H1 (cell line): ENCODE measurements at regions of chr1 and their contacts with region 1.

Region 1: DNA sequence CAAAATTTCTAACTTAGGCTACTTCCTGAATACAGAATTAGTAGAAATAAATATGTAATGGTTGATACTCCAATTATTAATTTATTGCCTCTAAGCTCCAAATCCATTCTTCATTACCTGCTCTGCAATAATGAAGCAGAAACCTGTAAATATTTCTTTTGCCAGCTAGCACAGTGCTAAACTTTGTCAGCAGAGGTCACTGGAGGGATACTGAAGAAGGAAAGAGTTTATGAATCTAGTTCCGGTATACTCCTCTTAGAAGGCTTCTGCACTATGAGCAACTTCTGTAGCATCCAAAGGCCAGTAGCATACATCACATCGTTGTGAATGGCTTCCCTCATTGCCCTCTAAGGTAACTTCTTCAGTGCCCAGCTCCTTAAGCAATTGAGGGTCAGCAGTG is 81.0 kb upstream of the LHX8 start:
- DNase-seq: no peak
- H3K4me3 ChIP-seq: no peak overlapping the region
- H3K27ac ChIP-seq: no peak overlapping the region
- H3K4me1 ChIP-seq: no peaks in the 10 kb centered on the region
- H3K27me3 ChIP-seq: no peaks in the 10 kb centered on the region
- CTCF ChIP-seq: peak in 2 of 3 experiments; percentile 58 to 64; a peak in 3 of 4 replicates
- EP300 ChIP-seq: no peak
- POLR2A ChIP-seq: no peak
- RAD21 ChIP-seq: peak; percentile 88

Region 2: DNA sequence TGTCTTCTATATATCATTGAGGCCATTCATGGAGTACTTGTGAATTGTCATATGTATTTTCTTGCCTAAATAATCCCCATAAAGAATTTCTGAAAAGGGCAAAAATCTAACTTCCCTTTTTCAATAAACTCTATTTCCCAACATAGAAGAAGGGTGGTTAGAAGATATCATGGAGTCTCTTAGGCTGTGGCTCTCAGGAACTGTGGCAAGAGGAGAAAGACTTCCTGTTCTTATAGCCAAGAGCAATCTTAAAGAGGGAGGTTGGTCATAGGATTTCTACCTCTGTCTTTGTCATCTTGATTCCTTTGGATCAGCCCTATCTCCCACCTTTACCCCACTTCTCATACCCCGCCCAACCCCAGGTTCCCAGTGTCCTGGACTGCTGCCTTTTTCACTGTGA is 144.4 kb before region 1 on chr1:
- CTCF ChIA-PET with region 1: no interaction called
- POLR2A ChIA-PET with region 1: no interaction called
- DNase-seq: no peak
- H3K4me3 ChIP-seq: no peak overlapping the region
- H3K27ac ChIP-seq: no peak overlapping the region
- H3K4me1 ChIP-seq: no peaks in the 10 kb centered on the region
- H3K27me3 ChIP-seq: no peaks in the 10 kb centered on the region
- CTCF ChIP-seq: no peak
- EP300 ChIP-seq: no peak
- POLR2A ChIP-seq: no peak
- RAD21 ChIP-seq: no peak

Region 3: GRCh38 chr1:75074831-75075395 is 21.7 kb after region 1 on chr1:
- CTCF ChIA-PET with region 1: interaction called, 41 read pairs
- POLR2A ChIA-PET with region 1: no interaction called
- DNase-seq: no peak
- H3K4me3 ChIP-seq: peak overlapping the region in 3 of 4 experiments; percentile 2 to 48 (median 10); a peak in 3 of 8 replicates
- H3K27ac ChIP-seq: peak overlapping the region; percentile 82
- H3K4me1 ChIP-seq: peaks cover 4 to 18% (median 5%) of the 10 kb centered on the region in 4 experiments; a peak in 4 of 7 replicates
- H3K27me3 ChIP-seq: no peaks in the 10 kb centered on the region
- CTCF ChIP-seq: no peak
- EP300 ChIP-seq: no peak
- POLR2A ChIP-seq: no peak
- RAD21 ChIP-seq: no peak

Region 4: DNA sequence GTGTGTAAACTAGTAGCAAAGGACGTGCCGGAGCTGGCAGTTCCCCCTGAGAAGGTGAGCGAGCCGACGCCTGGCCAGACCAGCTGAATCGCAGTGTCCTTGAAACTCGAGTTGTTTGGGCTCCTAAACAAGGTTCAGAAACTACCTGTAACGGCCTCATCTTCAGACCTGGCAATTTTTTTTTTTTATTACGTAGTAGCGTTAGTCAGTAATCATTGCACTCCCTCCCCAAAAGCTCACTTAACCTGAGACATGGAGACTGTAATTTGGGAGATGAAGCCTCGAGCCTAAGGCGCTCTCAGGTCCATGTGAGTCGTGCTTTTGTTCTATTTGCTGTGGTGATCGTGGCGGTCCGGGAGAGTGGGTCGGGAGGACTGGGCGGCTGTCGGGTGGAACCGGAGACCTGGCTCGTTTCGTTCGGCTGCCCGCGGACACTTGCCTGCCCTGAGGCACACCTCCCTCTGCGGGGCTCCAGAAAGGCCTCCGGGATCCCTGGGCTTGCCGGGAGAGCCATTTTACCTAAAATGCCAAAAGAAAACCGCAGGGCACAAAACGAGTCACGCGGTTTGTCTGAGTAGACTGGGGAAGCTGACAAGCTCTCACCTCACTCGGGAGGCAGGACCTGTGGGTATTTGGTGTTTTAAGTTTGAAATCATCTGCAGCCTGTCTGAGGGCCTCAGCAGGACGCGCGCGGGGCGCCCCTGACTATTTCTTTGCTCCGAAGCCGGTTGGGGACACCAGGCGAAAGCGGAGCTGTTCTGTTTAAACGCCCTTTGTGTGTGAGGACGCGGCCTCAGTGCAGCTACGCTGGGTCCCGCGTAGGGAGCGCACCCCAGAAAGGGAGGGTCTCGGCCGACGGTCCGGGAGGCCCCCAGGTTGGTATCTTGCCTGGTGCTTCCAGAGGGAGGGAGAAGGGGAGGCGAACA is 81.7 kb after region 1 on chr1:
- CTCF ChIA-PET with region 1: interaction called, 33 read pairs
- POLR2A ChIA-PET with region 1: no interaction called
- DNase-seq: peak in 1 of 2 experiments; percentile 79
- H3K4me3 ChIP-seq: peak overlapping the region; percentile 49 to 70 (median 57)
- H3K27ac ChIP-seq: no peak overlapping the region
- H3K4me1 ChIP-seq: peaks cover 10 to 46% (median 22%) of the 10 kb centered on the region in 4 experiments
- H3K27me3 ChIP-seq: peaks cover 43 to 94% (median 72%) of the 10 kb centered on the region in 4 experiments
- CTCF ChIP-seq: no peak
- EP300 ChIP-seq: no peak
- POLR2A ChIP-seq: no peak
- RAD21 ChIP-seq: no peak

Region 5: GRCh38 chr1:75159154-75159553 is 105.9 kb after region 1 on chr1:
- CTCF ChIA-PET with region 1: no interaction called
- POLR2A ChIA-PET with region 1: no interaction called
- DNase-seq: no peak
- H3K4me3 ChIP-seq: no peak overlapping the region
- H3K27ac ChIP-seq: no peak overlapping the region
- H3K4me1 ChIP-seq: peaks cover 0 to 2% (median 0%) of the 10 kb centered on the region in 4 experiments; a peak in 1 of 7 replicates
- H3K27me3 ChIP-seq: no peaks in the 10 kb centered on the region
- CTCF ChIP-seq: no peak
- EP300 ChIP-seq: no peak
- POLR2A ChIP-seq: no peak
- RAD21 ChIP-seq: no peak

Region 6: DNA sequence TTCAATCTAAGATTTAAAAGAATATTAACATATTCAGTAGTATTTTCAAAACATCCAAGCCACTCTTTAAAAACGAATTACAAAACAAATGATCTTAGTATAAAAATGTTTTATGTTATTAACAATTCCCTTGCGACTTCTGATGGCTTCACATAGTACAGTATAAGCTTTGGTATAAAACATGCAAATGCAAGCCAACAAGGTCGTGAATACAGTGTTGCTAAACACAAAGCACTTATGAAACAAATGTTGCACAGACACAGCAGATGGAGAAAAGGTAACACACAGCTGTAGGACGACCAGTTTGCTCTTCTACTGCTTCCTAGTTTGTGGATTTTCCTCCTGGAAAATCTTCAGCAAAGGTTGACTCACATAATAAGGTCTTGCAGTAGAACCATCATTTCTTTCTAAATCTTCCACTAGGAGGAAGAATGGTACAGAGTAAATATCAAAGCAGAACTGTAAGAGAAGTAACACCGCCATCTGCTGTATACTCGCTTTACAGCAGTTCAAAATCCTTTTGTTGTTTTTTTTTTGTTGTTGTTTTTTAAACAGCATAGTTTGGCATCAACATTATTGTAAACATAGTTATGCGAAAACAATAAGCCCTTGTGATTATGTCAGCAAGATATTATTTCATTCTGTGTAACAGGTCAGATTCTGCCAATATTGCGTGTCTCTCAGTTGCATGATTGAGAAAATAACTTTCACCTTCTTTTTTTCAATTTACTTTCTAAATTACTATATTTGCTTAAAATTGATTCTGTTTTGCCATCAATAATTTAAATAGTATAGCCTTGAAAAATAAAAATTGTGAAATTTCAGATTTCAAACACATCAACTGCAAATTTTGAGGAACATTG is 150.4 kb after region 1 on chr1:
- CTCF ChIA-PET with region 1: interaction called, 92 read pairs
- POLR2A ChIA-PET with region 1: no interaction called
- DNase-seq: no peak
- H3K4me3 ChIP-seq: no peak overlapping the region
- H3K27ac ChIP-seq: no peak overlapping the region
- H3K4me1 ChIP-seq: peaks cover 0 to 3% (median 0%) of the 10 kb centered on the region in 4 experiments; a peak in 1 of 7 replicates
- H3K27me3 ChIP-seq: no peaks in the 10 kb centered on the region
- CTCF ChIP-seq: peak in 2 of 3 experiments; percentile 79 to 91; a peak in 3 of 4 replicates
- EP300 ChIP-seq: no peak
- POLR2A ChIP-seq: no peak
- RAD21 ChIP-seq: peak; percentile 92 to 94

Region 7: GRCh38 chr1:75257424-75257823 is 204.2 kb after region 1 on chr1:
- CTCF ChIA-PET with region 1: interaction called, 12 read pairs
- POLR2A ChIA-PET with region 1: no interaction called
- DNase-seq: peak; percentile 21 to 60
- H3K4me3 ChIP-seq: no peak overlapping the region
- H3K27ac ChIP-seq: no peak overlapping the region
- H3K4me1 ChIP-seq: no peaks in the 10 kb centered on the region
- H3K27me3 ChIP-seq: no peaks in the 10 kb centered on the region
- CTCF ChIP-seq: peak; percentile 28 to 68 (median 49)
- EP300 ChIP-seq: no peak
- POLR2A ChIP-seq: no peak
- RAD21 ChIP-seq: peak; percentile 38 to 52; a peak in 3 of 4 replicates